PC-9 (cell line): ENCODE measurements at regions of chr11 and their contacts with region 1.

Region 1: GRCh38 chr11:125618383-125618782 is 6.6 kb upstream of the CHEK1 start:
- DNase-seq: no peak
- H3K4me3 ChIP-seq: no peak overlapping the region
- H3K27ac ChIP-seq: no peak overlapping the region
- H3K4me1 ChIP-seq: no peaks in the 10 kb centered on the region
- H3K27me3 ChIP-seq: no peaks in the 10 kb centered on the region
- CTCF ChIP-seq: no peak

Region 2: GRCh38 chr11:125649465-125650166 is 31.2 kb after region 1 on chr11:
- CTCF ChIA-PET with region 1: no interaction called
- POLR2A ChIA-PET with region 1: interaction called, 5 read pairs
- intact Hi-C with region 1: loop called (anchors 5 kb)
- DNase-seq: no peak
- H3K4me3 ChIP-seq: no peak overlapping the region
- H3K27ac ChIP-seq: no peak overlapping the region
- H3K4me1 ChIP-seq: no peaks in the 10 kb centered on the region
- H3K27me3 ChIP-seq: no peaks in the 10 kb centered on the region
- CTCF ChIP-seq: no peak

Region 3: DNA sequence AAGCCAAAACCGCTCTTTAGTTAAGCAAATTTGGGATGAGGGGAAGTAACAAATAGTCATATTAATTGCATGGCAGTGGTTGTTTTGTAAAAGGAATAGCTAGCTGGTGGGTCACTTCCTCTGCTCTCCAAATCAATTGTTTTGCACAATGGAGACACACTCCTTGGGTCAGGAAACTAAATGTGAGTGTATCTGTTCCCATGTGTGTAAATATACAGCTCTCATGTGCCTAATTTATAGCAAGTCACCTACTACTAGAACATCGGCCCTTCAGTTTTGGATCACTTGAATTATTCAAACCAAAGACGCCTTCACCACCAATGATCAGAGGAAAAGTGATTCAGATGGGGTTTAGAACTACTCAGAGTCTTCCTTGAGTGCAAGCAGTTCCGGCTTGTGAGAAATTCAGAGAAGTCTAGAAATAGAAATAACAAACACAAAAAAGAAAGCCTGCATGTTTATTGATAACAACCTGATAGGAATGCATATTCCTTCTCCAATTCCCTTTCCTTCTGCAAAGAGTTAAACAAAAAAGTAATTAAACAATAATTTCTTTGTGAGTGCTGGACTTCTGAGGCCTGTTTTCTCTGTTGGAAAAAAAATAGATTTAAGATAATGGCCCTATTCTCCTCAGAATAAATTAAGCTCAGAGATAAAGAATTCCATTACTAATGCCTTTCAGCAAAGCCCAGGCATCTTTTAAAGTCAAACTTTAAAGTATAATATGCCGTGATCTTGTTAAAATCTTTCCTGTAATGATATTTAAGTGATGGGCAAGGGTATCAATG is 1281.8 kb after region 1 on chr11:
- CTCF ChIA-PET with region 1: no interaction called
- POLR2A ChIA-PET with region 1: no interaction called
- intact Hi-C with region 1: no loop called
- DNase-seq: no peak
- H3K4me3 ChIP-seq: no peak overlapping the region
- H3K27ac ChIP-seq: no peak overlapping the region
- H3K4me1 ChIP-seq: no peaks in the 10 kb centered on the region
- H3K27me3 ChIP-seq: peaks cover 16% of the 10 kb centered on the region
- CTCF ChIP-seq: no peak